ENCODE measurements at regions of chr3 and their contacts with region 1.

Region 1: GRCh38 chr3:186534113-186534669 is 10.0 kb downstream of the CRYGS start:
- DNase-seq: peak; percentile 31
- H3K4me3 Mint-ChIP-seq: no peak overlapping the region
- H3K27ac Mint-ChIP-seq: no peak overlapping the region
- H3K4me1 Mint-ChIP-seq: peaks cover 26% of the 10 kb centered on the region
- H3K27me3 Mint-ChIP-seq: no peaks in the 10 kb centered on the region

Region 2: DNA sequence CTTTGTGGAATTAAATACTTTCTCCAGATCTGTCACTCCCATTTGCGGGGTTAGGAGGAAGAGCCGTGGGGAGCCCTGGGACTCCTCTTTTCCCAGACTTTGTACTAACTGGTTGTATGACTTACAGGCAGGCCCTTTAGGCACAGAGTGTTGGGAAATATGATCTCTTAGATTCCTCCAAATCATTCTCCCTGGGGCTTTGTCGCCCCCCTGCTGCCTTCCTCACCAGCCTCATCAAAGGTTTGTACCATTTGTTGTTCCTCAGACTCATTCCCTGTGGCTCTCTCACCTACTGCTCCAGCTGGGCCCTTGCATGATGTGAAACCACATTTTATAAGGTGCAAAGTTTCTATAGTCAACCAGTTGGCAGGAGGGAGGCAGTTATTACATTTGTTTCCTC is 46.4 kb before region 1 on chr3:
- CTCF ChIA-PET with region 1: no interaction called
- POLR2A ChIA-PET with region 1: no interaction called
- DNase-seq: no peak
- H3K4me3 Mint-ChIP-seq: no peak overlapping the region
- H3K27ac Mint-ChIP-seq: no peak overlapping the region
- H3K4me1 Mint-ChIP-seq: no peaks in the 10 kb centered on the region
- H3K27me3 Mint-ChIP-seq: no peaks in the 10 kb centered on the region

Region 3: GRCh38 chr3:186520957-186521842 is 13.0 kb before region 1 on chr3:
- CTCF ChIA-PET with region 1: interaction called, 38 read pairs
- POLR2A ChIA-PET with region 1: interaction called, 12 read pairs
- DNase-seq: peak; percentile 34
- H3K4me3 Mint-ChIP-seq: no peak overlapping the region
- H3K27ac Mint-ChIP-seq: no peak overlapping the region
- H3K4me1 Mint-ChIP-seq: peaks cover 41% of the 10 kb centered on the region
- H3K27me3 Mint-ChIP-seq: no peaks in the 10 kb centered on the region

Region 4: DNA sequence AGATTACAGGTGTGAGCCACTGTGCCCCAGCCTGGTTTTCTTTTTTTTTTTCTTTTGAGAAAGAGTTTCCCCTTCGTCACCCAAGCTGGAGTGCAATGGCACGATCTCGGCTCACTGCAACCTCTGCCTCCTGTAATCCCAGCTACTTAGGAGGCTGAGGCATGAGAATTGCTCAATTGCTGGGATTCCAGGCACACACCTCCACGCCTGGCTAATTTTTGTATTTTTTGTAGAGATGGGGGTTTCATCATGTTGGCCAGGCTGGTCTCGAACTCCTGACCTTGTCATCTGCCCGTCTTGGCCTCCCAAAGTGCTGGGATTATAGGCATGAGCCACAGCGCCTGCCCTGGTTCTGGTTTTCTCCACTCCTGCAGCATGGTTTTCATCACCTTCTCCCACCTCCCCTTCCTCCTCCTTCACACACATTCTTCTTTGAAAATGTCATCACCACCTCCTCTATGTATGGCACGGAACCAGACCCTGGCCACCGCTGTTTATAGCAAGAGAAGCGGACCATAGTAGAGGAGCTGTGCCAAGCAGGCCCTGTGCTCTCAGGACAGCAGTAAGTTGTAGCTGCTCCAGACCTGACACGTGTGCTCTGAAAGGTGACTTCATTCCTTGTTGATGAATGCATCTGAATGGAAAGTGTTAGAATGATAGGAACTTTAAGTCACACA is 64.1 kb after region 1 on chr3:
- CTCF ChIA-PET with region 1: no interaction called
- POLR2A ChIA-PET with region 1: no interaction called
- DNase-seq: no peak
- H3K4me3 Mint-ChIP-seq: no peak overlapping the region
- H3K27ac Mint-ChIP-seq: no peak overlapping the region
- H3K4me1 Mint-ChIP-seq: no peaks in the 10 kb centered on the region
- H3K27me3 Mint-ChIP-seq: peaks cover 6% of the 10 kb centered on the region